Uterus (tissue), 4 donors: ENCODE measurements at regions of chr4 and their contacts with region 1.

Region 1: GRCh38 chr4:86939729-86940575 is 5.1 kb downstream of the AFF1 start:
- DNase-seq: no peak
- H3K4me3 ChIP-seq: no peak overlapping the region
- H3K27ac ChIP-seq: peak overlapping the region; percentile 7 to 51
- H3K4me1 ChIP-seq: peaks cover 0 to 20% of the 10 kb centered on the region in 2 donors
- H3K27me3 ChIP-seq: no peaks in the 10 kb centered on the region
- CTCF ChIP-seq: no peak
- POLR2A ChIP-seq: no peak

Region 2: GRCh38 chr4:86999136-86999643 is 59.2 kb after region 1 on chr4:
- intact Hi-C with region 1: loop called (anchors 10 kb)
- DNase-seq: no peak
- H3K4me3 ChIP-seq: no peak overlapping the region
- H3K27ac ChIP-seq: peak overlapping the region; percentile 50 to 68
- H3K4me1 ChIP-seq: peaks cover 0 to 4% of the 10 kb centered on the region in 2 donors
- H3K27me3 ChIP-seq: no peaks in the 10 kb centered on the region
- CTCF ChIP-seq: no peak
- POLR2A ChIP-seq: no peak